Motor neuron (in vitro differentiated cells): ENCODE measurements at regions of chr1 and their contacts with region 1.

Region 1: GRCh38 chr1:21232044-21232443 is 55.3 kb upstream of the EIF4G3 start:
- ATAC-seq: peak; percentile 44 to 84 (median 52)
- H3K4me3 ChIP-seq: no peak overlapping the region
- H3K27ac ChIP-seq: no peak overlapping the region
- H3K4me1 ChIP-seq: peaks cover 0 to 1% of the 10 kb centered on the region in 2 donors

Region 2: GRCh38 chr1:21378705-21379494 is 146.9 kb after region 1 on chr1:
- in situ Hi-C with region 1: loop called in 1 of 9 experiments (anchors 10 kb)
- ATAC-seq: peak in 5 of 8 experiments; percentile 29 to 71 (median 61)
- H3K4me3 ChIP-seq: no peak overlapping the region
- H3K27ac ChIP-seq: no peak overlapping the region
- H3K4me1 ChIP-seq: no peaks in the 10 kb centered on the region

Region 3: DNA sequence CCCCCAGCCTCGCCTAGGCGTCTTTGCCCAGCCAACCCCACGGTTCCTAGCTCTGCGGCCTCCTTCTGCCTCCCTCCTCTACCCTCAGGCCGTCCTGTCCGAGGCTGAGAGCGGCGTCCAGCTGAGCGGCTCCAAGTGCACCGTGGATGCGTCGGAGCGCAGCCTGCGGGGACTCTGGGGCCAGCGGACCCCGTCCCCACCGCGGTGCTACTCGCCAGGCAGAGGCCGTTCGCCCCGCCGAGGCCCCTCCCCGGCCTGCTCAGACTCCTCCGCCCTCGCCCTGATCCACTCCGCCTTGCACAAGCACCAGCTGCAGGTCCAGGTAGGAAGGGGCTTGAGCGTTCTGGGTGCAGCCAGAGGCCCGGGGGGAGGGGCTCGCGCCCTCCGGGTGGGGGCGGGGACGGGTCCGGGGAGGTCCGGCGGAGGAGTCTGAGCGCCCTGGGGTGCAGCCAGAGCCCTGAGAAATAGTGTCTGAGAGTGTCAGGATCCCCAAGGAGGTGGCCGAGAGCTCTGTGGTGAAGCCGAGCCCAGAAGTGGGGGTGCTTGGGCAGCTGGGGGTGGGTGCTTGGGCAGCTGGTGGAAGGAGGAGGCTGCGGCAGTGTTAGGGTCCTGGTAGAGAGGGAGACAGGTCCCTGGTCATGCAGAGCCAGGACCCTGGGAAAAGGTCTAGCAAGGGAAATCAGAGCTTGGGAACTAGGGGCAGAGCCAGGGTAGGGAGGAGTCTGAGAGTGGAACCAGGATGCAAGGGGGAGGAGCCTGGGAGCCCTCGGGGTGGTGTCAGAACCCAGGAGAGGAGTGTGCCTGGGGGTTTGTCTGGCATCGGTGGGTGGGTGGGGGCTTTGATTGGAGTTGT is 204.7 kb after region 1 on chr1:
- in situ Hi-C with region 1: no loop called
- ATAC-seq: peak in 3 of 8 experiments; percentile 6 to 45 (median 6)
- H3K4me3 ChIP-seq: peak overlapping the region in 1 of 5 donors; percentile 14
- H3K27ac ChIP-seq: no peak overlapping the region
- H3K4me1 ChIP-seq: peaks cover 6 to 8% of the 10 kb centered on the region in 2 donors

Region 4: GRCh38 chr1:21573971-21574465 is 342.0 kb after region 1 on chr1:
- in situ Hi-C with region 1: no loop called
- ATAC-seq: peak; percentile 67 to 93 (median 76)
- H3K4me3 ChIP-seq: no peak overlapping the region
- H3K27ac ChIP-seq: no peak overlapping the region
- H3K4me1 ChIP-seq: peaks cover 15 to 18% of the 10 kb centered on the region in 2 donors

Region 5: DNA sequence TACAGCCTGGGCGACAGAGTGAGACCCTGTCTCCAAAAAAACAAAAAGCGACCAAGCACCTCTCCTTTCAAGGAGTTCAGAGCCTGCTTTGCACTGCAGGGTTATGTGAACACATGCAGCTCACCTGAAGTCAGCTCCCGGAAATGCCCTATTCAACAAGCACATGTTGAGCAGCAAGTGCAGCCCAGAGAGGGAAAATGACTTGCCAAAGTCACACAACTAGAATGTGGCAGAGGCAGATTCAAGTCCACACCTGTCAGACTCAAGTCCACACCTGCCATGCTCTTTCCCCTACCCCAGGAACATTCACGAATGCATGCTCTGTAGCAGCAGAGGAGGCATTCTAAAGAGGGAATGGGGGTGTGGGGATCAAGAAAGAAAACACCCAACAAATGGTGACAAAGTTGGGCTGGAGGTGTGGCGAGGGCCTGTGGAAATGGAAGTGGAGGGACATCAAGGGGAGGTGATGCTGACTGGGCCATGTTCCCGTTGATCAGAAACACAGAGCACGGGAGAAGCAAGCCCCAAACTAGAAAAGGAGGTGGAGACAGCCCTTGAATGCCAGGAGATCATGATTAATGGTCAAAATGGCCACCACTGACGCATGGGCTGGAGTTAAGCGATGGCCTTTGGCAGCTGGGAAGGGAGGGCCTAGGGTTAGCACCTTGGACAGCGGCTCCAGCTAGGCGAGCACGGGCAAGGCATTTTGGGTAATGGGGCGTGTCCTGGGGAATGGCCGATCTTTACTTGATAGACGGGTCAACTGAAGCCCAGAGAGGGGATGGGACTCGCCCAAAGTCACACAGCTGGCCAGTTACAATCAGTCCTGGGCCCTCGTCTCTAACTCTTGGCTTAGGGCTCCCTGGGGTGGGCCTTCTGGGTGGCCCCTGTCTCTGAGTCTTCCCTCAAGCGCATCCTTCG is 415.6 kb after region 1 on chr1:
- in situ Hi-C with region 1: loop called in 2 of 9 experiments (anchors 25 kb)
- ATAC-seq: peak; percentile 3 to 71 (median 24)
- H3K4me3 ChIP-seq: no peak overlapping the region
- H3K27ac ChIP-seq: peak overlapping the region in 1 of 2 donors; percentile 16
- H3K4me1 ChIP-seq: peaks cover 16 to 34% of the 10 kb centered on the region in 2 donors

Region 6: GRCh38 chr1:21659099-21659923 is 427.3 kb after region 1 on chr1:
- in situ Hi-C with region 1: loop called in 1 of 9 experiments (anchors 25 kb)
- ATAC-seq: peak; percentile 76 to 95 (median 88)
- H3K4me3 ChIP-seq: peak overlapping the region; percentile 21 to 32 (median 27)
- H3K27ac ChIP-seq: peak overlapping the region; percentile 2 to 27
- H3K4me1 ChIP-seq: peaks cover 6 to 16% of the 10 kb centered on the region in 2 donors

Region 7: DNA sequence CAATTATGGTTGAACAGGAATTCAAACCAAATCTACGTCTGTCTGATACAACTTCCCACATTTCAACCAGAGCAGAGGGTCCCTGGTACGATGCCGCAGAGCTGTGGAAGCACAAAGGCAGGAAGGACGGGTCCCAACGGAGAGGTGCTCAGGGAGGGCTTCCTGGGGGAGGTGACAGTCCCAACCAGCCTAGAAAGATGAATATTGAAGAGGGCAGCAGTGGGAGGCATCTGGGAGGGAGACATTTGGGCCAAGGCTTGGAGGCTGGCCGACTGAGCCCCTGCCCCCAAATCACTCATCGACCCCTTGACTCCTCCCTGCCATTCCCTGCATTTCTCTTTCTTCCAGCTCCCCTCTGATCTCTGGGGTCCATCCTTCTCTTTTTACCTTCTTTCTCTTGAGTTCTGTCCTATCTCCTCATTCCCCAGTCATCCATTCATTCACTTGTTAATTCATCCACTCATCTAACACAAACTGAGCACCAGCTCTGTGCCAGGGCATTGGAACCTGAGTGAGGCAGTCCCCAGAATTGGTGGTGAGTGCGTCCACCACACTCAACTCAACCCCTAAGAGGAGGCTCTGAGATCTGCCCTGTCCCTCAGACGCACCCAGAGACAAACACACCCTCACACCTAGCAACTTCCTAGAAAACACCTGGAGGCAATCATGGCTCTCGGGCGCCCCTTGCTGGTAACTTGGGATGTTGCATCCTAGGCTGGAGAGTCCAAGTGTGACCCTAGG is 731.6 kb after region 1 on chr1:
- in situ Hi-C with region 1: loop called in 1 of 9 experiments (anchors 25 kb)
- ATAC-seq: peak; percentile 82 to 95 (median 88)
- H3K4me3 ChIP-seq: no peak overlapping the region
- H3K27ac ChIP-seq: no peak overlapping the region
- H3K4me1 ChIP-seq: no peaks in the 10 kb centered on the region